CD4-positive, alpha-beta memory T cell (primary cell): ENCODE measurements at regions of chr20 and their contacts with region 1.

Region 1: DNA sequence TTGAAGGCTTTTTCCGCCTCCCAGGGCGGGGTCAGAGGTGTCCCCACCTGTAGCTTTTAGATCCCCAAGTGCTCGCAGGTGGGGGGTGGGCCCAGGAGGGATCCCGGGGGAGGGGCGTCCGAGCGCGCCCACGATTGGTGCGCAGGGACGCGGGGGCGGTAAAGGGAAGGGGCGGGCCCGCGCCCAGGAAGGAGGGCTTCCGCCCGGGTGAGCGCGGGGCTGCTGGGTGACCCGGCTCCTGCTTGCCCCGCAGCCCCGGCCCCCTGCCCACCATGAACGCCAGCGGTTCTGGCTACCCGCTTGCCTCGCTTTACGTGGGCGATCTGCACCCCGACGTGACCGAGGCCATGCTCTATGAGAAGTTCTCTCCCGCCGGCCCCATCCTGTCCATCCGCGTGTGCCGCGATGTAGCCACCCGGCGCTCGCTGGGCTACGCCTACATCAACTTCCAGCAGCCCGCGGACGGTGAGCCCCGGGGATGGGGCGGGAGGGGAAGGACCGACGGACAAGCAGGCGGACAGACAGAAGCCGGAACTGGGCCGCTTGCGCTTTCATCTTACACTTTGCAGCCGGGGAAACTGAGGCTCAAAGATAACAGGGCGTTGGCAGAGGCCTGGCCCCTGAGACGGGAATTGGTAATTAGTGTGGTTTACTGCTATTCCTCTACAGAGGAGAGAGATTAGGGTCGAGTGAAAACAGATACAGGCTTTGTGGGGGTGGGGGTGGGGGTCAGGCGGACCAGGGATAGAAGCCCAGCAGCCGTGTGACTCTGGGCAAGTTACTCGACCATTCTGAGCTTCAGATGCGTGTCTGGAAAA is at the start of gene PABPC1L:
- DNase-seq: peak; percentile 68 to 83 (median 71)
- H3K4me3 ChIP-seq: peak within 1 kb of the TSS; percentile 42 to 61
- H3K4me3 Mint-ChIP-seq: peak within 1 kb of the TSS; percentile 82 to 92 (median 86)
- H3K27ac ChIP-seq: peak within 1 kb of the TSS; percentile 40
- H3K27ac Mint-ChIP-seq: peak within 1 kb of the TSS; percentile 29 to 86 (median 74)
- H3K4me1 ChIP-seq: peaks cover 19% of the 10 kb centered on the region
- H3K4me1 Mint-ChIP-seq: peaks cover 14 to 45% (median 30%) of the 10 kb centered on the region in 4 donors
- H3K27me3 ChIP-seq: no peaks in the 10 kb centered on the region
- H3K27me3 Mint-ChIP-seq: no peaks in the 10 kb centered on the region
- total RNA-seq, gene PABPC1L: 46.5 to 50.0 TPM

Region 2: DNA sequence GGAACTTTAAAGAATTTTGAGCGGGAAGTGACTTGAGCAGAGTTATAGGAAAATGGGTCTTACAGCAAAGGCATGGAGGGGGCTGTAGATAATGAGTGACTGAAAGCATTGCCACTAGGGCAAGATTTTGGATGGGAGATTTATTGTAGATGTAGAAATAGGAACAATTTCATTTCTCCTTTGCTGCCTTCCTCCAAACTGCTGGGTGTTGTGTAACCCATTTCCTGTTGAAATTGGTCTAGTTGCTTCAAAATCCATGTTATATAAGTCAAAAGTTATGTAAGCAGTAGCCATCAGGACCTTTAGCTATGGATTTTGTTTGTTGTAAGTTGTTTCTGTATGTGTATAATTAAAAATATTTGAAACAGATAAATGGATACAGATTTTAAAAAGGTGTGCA is 13.5 kb before region 1 on chr20:
- CTCF ChIA-PET with region 1: interaction called, 3 read pairs
- POLR2A ChIA-PET with region 1: interaction called, 15 read pairs
- intact Hi-C with region 1: no loop called
- DNase-seq: no peak
- H3K4me3 ChIP-seq: no peak overlapping the region
- H3K4me3 Mint-ChIP-seq: peak overlapping the region; percentile 27 to 78 (median 48)
- H3K27ac ChIP-seq: no peak overlapping the region
- H3K27ac Mint-ChIP-seq: peak overlapping the region; percentile 9 to 94 (median 84)
- H3K4me1 ChIP-seq: peaks cover 98% of the 10 kb centered on the region
- H3K4me1 Mint-ChIP-seq: peaks cover 63 to 89% (median 77%) of the 10 kb centered on the region in 4 donors
- H3K27me3 ChIP-seq: no peaks in the 10 kb centered on the region
- H3K27me3 Mint-ChIP-seq: no peaks in the 10 kb centered on the region